ENCODE measurements at regions of chr17 and their contacts with region 1.

Region 1: DNA sequence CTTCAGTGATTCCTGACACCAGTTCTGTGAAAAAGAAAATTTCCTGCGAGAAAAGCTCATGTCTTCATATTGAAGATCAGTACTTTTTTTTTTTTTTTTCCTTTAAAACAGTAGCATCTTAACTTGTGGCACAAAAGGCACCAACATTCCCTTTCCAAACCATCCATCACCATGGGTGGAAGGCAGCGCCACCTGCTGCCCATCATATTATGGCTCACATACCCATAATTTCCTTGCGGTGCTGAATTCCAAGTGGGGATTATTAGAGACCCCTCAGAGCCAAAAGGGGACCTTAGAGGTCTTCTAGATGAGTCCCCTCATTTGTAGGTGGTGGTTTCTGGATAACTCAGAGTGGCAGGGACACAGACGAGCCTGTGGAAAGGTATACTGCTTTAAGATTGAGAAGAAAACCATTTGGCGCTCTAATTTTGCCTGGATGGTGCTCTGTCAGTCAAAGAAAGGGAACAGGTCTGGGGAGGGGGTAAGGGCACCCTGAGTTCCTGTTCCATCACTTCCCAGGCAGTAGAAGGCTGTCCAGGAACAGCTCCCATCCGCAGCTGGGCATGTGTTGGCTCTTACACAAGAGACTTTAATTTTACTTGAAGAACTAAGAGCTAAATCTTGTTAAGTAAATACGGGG is 7.9 kb upstream of the SOST start:
- DNase-seq: peak; percentile 39
- ATAC-seq: peak; percentile 79
- H3K4me3 ChIP-seq: no peak overlapping the region
- H3K27ac ChIP-seq: no peak overlapping the region
- H3K4me1 ChIP-seq: no peaks in the 10 kb centered on the region
- H3K27me3 ChIP-seq: no peaks in the 10 kb centered on the region
- CTCF ChIP-seq: peak; percentile 56 to 97 (median 90); a peak in 5 of 6 replicates
- POLR2A ChIP-seq: no peak
- RAD21 ChIP-seq: peak; percentile 50; the same call in 1 of the 2 replicates

Region 2: DNA sequence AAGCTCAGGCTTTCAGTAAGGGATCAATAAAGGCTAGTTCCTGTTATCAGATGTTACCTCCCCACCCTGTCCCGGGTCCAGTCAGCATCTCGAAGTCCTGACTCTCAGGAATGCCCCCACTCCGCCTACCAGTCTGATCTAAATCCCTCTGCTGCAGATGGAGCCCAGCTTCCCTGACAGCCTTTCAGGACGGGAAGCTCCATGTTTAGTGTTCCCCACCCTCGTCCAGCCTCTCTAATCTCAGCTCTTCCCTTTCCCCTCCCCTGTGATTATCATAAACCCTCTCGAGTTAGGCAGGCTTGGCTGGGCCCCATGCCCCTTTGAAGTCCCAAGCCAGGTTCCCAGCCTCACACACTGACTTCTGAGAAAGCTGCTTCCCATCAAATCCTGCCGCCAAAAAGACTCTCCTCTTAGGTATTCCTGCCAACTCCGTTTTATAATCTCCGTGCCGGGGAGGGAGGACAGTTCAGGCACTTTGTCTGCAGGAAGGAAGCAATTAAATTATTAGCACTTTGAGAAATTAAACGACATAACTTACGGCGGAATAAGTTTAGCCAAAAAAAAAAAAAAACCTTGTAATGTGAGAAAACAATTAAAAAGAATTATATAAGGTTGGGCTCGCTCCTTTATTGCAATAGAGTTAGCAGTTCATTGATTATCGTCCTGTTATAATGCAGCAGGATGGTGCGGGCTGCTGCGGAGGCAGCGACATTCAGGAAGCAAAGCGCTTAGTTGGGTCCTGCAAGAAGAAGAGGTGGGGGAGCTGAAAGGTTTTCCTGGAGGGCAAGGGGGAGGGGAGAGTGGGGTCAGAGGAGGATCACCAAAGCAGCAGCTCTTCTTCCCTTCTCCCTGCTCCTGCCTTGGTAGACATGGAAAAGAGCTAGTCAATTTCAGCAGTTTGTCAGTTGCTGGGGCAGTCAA is 203.6 kb before region 1 on chr17:
- CTCF ChIA-PET with region 1: no interaction called
- POLR2A ChIA-PET with region 1: no interaction called
- RAD21 ChIA-PET with region 1: no interaction called
- intact Hi-C with region 1: no loop called
- DNase-seq: no peak
- ATAC-seq: no peak
- H3K4me3 ChIP-seq: no peak overlapping the region
- H3K27ac ChIP-seq: no peak overlapping the region
- H3K4me1 ChIP-seq: no peaks in the 10 kb centered on the region
- H3K27me3 ChIP-seq: no peaks in the 10 kb centered on the region
- CTCF ChIP-seq: no peak
- POLR2A ChIP-seq: no peak
- RAD21 ChIP-seq: no peak

Region 3: DNA sequence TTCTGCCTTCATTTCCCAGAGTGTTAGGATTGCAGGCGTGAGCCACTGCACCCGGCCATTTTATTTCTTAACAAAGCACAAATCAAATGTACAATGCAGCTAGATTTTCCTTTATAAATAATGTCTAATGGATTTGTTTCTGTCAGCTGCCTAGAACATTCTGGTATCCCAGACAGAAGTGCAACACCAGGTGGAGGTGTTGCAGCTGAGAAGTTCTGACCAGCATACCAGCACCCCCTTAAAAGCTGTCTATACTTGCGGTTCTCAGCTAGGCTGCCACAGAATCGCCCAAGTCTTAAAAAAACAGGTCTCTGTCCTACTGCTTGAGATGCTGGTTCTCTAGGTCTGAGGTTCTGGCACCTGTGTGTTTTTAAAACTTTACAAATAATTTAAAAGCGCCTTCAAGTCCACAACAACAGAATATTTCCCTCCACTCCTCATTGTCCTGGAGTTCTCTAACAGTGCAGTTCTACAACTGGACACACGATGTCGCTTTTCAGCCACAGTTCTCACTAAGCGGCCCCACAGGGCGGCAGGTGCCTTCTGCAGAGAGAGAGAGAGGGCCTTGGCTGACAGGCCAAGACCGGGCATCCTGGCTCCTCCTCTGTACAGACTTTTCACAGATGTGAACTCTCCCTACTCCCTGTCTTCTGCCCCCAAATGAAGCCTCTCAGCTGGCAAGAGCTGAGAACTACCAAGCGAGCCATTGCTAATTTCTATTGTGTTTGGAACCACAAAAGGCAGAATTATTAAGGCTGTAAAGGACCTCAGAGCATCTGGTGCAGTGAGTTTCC is 72.3 kb before region 1 on chr17:
- CTCF ChIA-PET with region 1: interaction called, 158 read pairs
- POLR2A ChIA-PET with region 1: no interaction called
- RAD21 ChIA-PET with region 1: interaction called, 3 to 5 read pairs
- intact Hi-C with region 1: loop called (anchors 1 kb)
- DNase-seq: peak; percentile 78
- ATAC-seq: peak; percentile 94
- H3K4me3 ChIP-seq: no peak overlapping the region
- H3K27ac ChIP-seq: no peak overlapping the region
- H3K4me1 ChIP-seq: peaks cover 3 to 9% of the 10 kb centered on the region in 2 experiments; a peak in 3 of 4 replicates
- H3K27me3 ChIP-seq: no peaks in the 10 kb centered on the region
- CTCF ChIP-seq: peak; percentile 81 to 99 (median 92)
- POLR2A ChIP-seq: no peak
- RAD21 ChIP-seq: peak; percentile 98

Region 4: GRCh38 chr17:43720311-43721060 is 46.0 kb before region 1 on chr17:
- CTCF ChIA-PET with region 1: no interaction called
- POLR2A ChIA-PET with region 1: no interaction called
- RAD21 ChIA-PET with region 1: no interaction called
- intact Hi-C with region 1: no loop called
- DNase-seq: no peak
- ATAC-seq: no peak
- H3K4me3 ChIP-seq: no peak overlapping the region
- H3K27ac ChIP-seq: no peak overlapping the region
- H3K4me1 ChIP-seq: peaks cover 0 to 34% of the 10 kb centered on the region in 2 experiments; a peak in 2 of 4 replicates
- H3K27me3 ChIP-seq: no peaks in the 10 kb centered on the region
- CTCF ChIP-seq: no peak
- POLR2A ChIP-seq: no peak
- RAD21 ChIP-seq: no peak

Region 5: DNA sequence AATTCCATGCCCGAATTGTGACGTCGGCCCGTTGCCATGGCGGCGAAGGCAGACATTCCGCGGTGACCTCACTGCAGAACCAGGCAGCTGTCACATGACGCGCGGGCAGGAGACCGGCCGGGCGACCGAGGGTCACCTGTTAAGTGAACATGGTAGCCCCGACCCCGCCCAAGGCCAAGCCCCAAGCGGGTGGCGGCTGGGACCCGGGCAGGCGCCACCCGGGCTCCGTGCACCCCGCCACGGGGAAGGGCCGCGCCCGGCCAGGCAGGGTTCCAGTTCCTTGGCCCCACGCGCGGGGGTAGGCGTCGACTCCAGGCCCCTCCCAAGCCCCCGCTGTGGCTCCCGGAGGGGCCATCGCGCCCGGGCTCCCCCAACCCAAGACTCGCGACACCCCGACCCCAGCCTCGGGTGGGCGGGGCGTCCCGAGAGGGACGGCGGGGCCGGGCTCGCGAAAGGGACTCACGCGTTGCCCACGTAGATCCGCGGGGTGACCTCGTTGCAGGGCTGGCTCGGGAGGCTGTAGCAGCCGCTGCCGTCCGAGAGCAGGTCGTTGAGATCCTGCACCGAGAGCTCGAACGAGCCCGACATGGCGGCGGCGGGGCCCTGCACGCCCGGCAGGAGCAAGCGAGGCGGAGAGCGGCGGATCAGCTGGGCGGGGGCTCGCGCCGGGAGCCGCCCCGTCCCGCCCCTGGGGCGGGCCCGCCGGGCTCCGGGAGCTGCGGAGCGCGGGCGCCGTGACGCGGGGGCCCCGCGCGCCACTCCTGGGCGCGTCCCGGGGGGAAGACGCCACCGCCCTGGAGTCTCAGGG is 12.0 kb after region 1 on chr17 and contains the start of gene DUSP3:
- CTCF ChIA-PET with region 1: interaction called, 12 read pairs
- POLR2A ChIA-PET with region 1: no interaction called
- RAD21 ChIA-PET with region 1: no interaction called
- intact Hi-C with region 1: no loop called
- DNase-seq: peak; percentile 81
- ATAC-seq: peak; percentile 90
- H3K4me3 ChIP-seq: peak within 1 kb of the TSS; percentile 78 to 81
- H3K27ac ChIP-seq: peak within 1 kb of the TSS; percentile 87
- H3K4me1 ChIP-seq: peaks cover 7 to 13% of the 10 kb centered on the region in 2 experiments; a peak in 3 of 4 replicates
- H3K27me3 ChIP-seq: no peaks in the 10 kb centered on the region
- CTCF ChIP-seq: no peak
- POLR2A ChIP-seq: peak; percentile 63
- RAD21 ChIP-seq: no peak
- total RNA-seq, gene DUSP3: 29.6 TPM